Activated B cell treated with CpG ODN at 0.5 μM for 24 hours (primary cell): ENCODE measurements at regions of chr9 and their contacts with region 1.

Region 1: GRCh38 chr9:127586537-127586936 is 25.5 kb upstream of the STXBP1 start:
- DNase-seq: no peak
- ATAC-seq: peak; percentile 64
- H3K4me3 Mint-ChIP-seq: no peak overlapping the region
- H3K27ac Mint-ChIP-seq: no peak overlapping the region
- H3K4me1 Mint-ChIP-seq: no peaks in the 10 kb centered on the region
- H3K27me3 Mint-ChIP-seq: peaks cover 24% of the 10 kb centered on the region
- CTCF ChIP-seq: no peak

Region 2: GRCh38 chr9:126939821-126940221 is 646.7 kb before region 1 on chr9:
- CTCF ChIA-PET with region 1: interaction called, 7 read pairs
- POLR2A ChIA-PET with region 1: no interaction called
- intact Hi-C with region 1: loop called (anchors 1 kb)
- DNase-seq: no peak
- ATAC-seq: no peak
- H3K4me3 Mint-ChIP-seq: no peak overlapping the region
- H3K27ac Mint-ChIP-seq: no peak overlapping the region
- H3K4me1 Mint-ChIP-seq: peaks cover 5% of the 10 kb centered on the region
- H3K27me3 Mint-ChIP-seq: no peaks in the 10 kb centered on the region
- CTCF ChIP-seq: no peak

Region 3: GRCh38 chr9:127214421-127215267 is 371.9 kb before region 1 on chr9:
- CTCF ChIA-PET with region 1: interaction called, 3 read pairs
- POLR2A ChIA-PET with region 1: no interaction called
- intact Hi-C with region 1: loop called (anchors 1 kb)
- DNase-seq: no peak
- ATAC-seq: peak; percentile 86
- H3K4me3 Mint-ChIP-seq: no peak overlapping the region
- H3K27ac Mint-ChIP-seq: no peak overlapping the region
- H3K4me1 Mint-ChIP-seq: peaks cover 4% of the 10 kb centered on the region
- H3K27me3 Mint-ChIP-seq: no peaks in the 10 kb centered on the region
- CTCF ChIP-seq: peak; percentile 17

Region 4: GRCh38 chr9:127503947-127504782 is 82.4 kb before region 1 on chr9:
- CTCF ChIA-PET with region 1: interaction called, 19 read pairs
- POLR2A ChIA-PET with region 1: no interaction called
- intact Hi-C with region 1: loop called (anchors 1 kb)
- DNase-seq: peak; percentile 60
- ATAC-seq: peak; percentile 93
- H3K4me3 Mint-ChIP-seq: no peak overlapping the region
- H3K27ac Mint-ChIP-seq: no peak overlapping the region
- H3K4me1 Mint-ChIP-seq: no peaks in the 10 kb centered on the region
- H3K27me3 Mint-ChIP-seq: no peaks in the 10 kb centered on the region
- CTCF ChIP-seq: no peak